Naive thymus-derived CD4-positive, alpha-beta T cell (primary cell): ENCODE measurements at regions of chr18 and their contacts with region 1.

Region 1: DNA sequence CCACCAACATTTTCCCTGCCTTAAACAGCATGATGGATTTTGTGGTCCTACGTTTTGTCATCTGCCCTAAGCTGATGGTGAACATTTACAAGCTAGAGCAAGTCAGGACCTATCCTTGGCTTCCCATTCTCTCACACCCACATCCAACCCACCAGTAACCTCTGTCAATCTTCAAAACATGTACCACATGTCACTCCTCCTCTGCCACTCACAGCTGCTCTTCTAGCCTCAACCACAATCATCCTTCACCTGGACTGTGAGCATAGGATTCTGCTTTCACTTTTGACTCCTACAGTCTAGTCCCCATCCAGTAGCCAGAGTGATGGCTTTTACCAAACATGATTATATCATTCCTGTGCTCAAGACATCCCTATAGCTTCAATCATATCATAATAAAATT is 279.8 kb upstream of the DLGAP1 start:
- DNase-seq: no peak
- ATAC-seq: no peak
- H3K4me3 ChIP-seq: no peak overlapping the region
- H3K4me3 Mint-ChIP-seq: no peak overlapping the region
- H3K27ac ChIP-seq: no peak overlapping the region
- H3K27ac Mint-ChIP-seq: no peak overlapping the region
- H3K4me1 ChIP-seq: no peaks in the 10 kb centered on the region
- H3K4me1 Mint-ChIP-seq: no peaks in the 10 kb centered on the region
- H3K27me3 ChIP-seq: no peaks in the 10 kb centered on the region
- H3K27me3 Mint-ChIP-seq: peaks cover 0 to 4% (median 0%) of the 10 kb centered on the region in 5 donors

Region 2: GRCh38 chr18:4196345-4196744 is 538.6 kb before region 1 on chr18:
- CTCF ChIA-PET with region 1: no interaction called
- POLR2A ChIA-PET with region 1: no interaction called
- intact Hi-C with region 1: loop called in 1 of 2 experiments (anchors 5 kb)
- DNase-seq: no peak
- ATAC-seq: no peak
- H3K4me3 ChIP-seq: no peak overlapping the region
- H3K4me3 Mint-ChIP-seq: no peak overlapping the region
- H3K27ac ChIP-seq: no peak overlapping the region
- H3K27ac Mint-ChIP-seq: no peak overlapping the region
- H3K4me1 ChIP-seq: no peaks in the 10 kb centered on the region
- H3K4me1 Mint-ChIP-seq: no peaks in the 10 kb centered on the region
- H3K27me3 ChIP-seq: no peaks in the 10 kb centered on the region
- H3K27me3 Mint-ChIP-seq: peaks cover 0 to 8% (median 0%) of the 10 kb centered on the region in 5 donors